BJ (cell line): ENCODE measurements at regions of chr20 and their contacts with region 1.

Region 1: DNA sequence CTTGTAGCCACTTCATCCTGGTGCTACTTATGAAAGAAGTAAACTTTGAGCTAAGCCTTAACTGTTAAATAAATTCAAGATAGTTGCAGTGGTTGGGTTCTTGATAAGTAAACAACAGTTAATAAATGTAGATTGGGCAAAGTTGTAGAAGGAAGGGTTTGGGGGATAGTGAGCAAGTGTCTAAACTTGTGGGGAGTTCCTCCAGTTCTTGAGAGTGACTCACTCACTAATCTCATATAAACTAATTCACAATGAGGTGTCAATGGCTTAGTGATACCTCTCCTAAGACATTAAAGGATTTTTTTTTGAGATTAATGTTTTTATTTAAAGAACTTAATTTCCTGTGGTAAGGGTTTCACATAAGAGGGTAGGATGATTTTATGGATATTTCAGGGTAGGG is 507.4 kb downstream of the BMP2 start:
- DNase-seq: no peak
- H3K4me3 ChIP-seq: no peak overlapping the region
- H3K27me3 ChIP-seq: no peaks in the 10 kb centered on the region
- CTCF ChIP-seq: no peak

Region 2: DNA sequence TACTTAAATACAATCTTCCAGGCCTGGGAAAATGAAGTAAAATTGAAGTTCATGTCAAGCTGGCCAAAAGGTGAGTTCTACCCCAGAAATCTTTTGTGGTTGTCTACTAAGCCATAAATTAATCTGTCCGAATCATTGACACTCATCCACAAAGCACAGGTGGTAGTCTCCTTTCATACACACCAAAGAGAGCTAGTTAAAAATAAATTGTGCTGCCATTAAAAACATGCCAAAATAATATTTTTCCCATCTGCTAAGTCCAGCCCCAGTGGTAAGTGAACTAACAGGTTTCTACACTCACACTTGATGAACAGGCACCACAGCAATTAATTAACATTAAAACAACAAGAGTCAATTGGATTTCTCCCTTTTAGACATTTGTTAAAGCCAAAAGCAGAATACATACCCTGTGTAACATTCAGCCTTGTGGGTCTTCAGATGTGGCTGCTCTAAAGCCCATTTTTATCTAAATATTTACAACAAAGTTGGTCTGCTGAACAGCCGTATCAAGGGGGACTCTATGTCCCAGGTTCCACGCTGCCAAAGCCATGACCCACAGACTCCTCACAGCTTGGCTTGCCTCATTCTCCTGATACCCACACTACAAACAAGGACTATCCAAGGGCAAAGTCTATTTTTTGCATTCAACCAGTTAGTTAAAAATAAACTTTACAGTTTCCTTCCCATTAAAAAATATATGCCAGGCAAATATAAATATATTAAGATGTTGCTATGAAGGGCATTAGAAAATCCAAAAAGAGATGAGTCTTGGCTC is 17.0 kb before region 1 on chr20:
- CTCF ChIA-PET with region 1: no interaction called
- POLR2A ChIA-PET with region 1: no interaction called
- DNase-seq: no peak
- H3K4me3 ChIP-seq: no peak overlapping the region
- H3K27me3 ChIP-seq: no peaks in the 10 kb centered on the region
- CTCF ChIP-seq: no peak

Region 3: GRCh38 chr20:7285918-7286556 is 11.2 kb after region 1 on chr20:
- CTCF ChIA-PET with region 1: interaction called, 11 read pairs
- POLR2A ChIA-PET with region 1: no interaction called
- DNase-seq: peak; percentile 7
- H3K4me3 ChIP-seq: no peak overlapping the region
- H3K27me3 ChIP-seq: no peaks in the 10 kb centered on the region
- CTCF ChIP-seq: peak; percentile 76